ENCODE measurements at regions of chr2 and their contacts with region 1.

Region 1: DNA sequence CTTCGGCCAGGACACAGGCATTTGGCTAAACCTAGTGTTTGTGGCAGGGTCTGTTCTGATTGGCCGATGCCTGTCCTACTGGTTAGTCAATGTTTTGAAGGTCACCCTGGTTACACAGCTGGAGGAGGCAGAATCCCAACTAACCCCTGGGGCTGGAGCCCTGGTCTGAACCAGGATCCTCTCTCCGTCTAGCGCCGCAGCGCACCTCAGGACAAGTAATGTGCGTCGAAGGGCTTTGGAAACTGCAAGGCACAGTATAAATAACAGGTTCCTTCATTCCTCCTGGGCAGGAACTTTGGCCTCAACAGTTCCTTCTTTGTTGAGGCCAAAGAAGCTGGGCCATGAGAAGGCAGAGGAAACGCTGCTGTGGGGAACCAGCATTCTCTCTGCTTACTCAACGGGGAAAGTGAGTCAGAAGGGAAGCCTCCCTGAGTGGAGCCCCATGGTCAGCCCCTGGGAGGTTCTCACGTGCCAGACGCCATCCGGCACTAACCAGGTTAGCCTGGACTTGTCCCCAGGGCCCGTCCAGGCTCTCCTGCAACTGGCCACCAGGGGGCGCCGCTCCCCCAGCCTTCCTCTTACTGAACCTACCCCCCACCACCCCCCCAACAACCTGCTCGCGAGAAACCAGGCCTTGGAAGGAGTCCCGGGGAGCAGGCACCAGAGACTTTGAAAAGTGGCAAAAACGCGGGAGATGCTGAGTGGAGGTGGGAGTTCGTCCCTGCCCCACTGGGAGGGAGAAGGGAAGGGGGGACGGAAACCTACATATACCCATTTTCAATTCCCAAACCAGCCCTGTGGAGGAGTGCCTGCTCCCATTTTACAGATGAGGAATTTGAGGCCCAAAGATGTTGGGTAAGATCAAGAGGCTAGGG is 19.8 kb downstream of the TEX44 start:
- DNase-seq: peak; percentile 94
- ATAC-seq: peak; percentile 66 to 69

Region 2: GRCh38 chr2:231642631-231643494 is 30.4 kb after region 1 on chr2:
- intact Hi-C with region 1: loop called in 1 of 2 experiments (anchors 2 kb)
- DNase-seq: peak; percentile 92
- ATAC-seq: peak; percentile 93 to 96

Region 3: DNA sequence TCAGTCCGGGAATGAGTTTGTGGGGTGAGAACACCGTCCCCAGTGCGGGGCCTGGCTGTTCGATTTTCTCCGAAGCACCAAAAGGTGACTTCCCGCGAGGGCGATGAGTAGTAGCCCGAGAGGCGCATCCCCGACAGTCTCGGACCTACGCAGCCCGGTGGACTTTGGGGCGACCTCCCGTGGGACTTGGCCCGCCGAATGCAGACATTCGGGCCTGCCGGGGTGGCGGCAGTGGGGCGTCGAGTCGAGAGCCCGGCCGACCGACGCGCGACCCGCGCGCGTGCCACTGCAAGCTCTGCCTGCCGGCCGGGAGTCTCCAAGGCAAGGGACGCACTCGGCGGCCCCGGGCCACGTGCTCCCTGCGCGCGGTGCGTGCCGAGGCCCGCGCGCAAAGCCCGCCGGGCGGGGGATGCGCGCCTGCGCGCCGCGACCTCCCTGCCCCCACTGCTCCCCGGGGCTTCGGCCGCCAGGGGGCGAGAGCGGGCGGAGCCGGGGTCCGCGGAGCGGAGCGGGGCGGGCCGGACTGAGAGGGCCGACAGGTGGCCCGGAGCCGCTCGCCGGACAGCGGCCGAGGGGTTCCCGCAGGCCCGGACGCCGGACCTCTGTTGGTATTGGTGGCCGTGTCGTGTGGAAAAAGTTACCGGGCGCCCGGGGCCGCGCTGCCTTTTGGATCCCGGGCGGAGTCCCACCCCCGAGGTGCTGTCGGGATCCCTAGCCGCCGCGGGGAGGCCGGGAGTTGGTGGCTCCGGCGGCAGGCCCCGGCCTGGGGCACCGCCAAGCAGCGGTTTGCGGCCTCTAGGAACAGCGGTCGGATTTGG is 97.8 kb after region 1 on chr2:
- intact Hi-C with region 1: loop called (anchors 2 to 5 kb)
- DNase-seq: peak; percentile 82
- ATAC-seq: peak; percentile 22 to 38

Region 4: GRCh38 chr2:231769170-231770136 is 157.0 kb after region 1 on chr2:
- intact Hi-C with region 1: no loop called
- DNase-seq: no peak
- ATAC-seq: no peak

Region 5: GRCh38 chr2:232038251-232038880 is 425.9 kb after region 1 on chr2:
- intact Hi-C with region 1: no loop called
- DNase-seq: no peak
- ATAC-seq: no peak